ENCODE measurements at regions of chr20 and their contacts with region 1.

Region 1: GRCh38 chr20:45771182-45771759 is 20.4 kb downstream of the WFDC3 start:
- DNase-seq: peak; percentile 70
- H3K4me3 ChIP-seq: peak overlapping the region in 1 of 2 experiments; percentile 38; a peak in 1 of 4 replicates
- H3K27ac ChIP-seq: no peak overlapping the region
- H3K4me1 ChIP-seq: peaks cover 0 to 3% of the 10 kb centered on the region in 2 experiments; a peak in 2 of 4 replicates
- H3K27me3 ChIP-seq: no peaks in the 10 kb centered on the region
- CTCF ChIP-seq: peak; percentile 97
- EP300 ChIP-seq: no peak
- RAD21 ChIP-seq: peak; percentile 95

Region 2: GRCh38 chr20:45322952-45323383 is 448.3 kb before region 1 on chr20:
- CTCF ChIA-PET with region 1: interaction called, 80 read pairs
- POLR2A ChIA-PET with region 1: interaction called, 3 read pairs
- DNase-seq: no peak
- H3K4me3 ChIP-seq: no peak overlapping the region
- H3K27ac ChIP-seq: no peak overlapping the region
- H3K4me1 ChIP-seq: peaks cover 0 to 8% of the 10 kb centered on the region in 2 experiments; a peak in 1 of 4 replicates
- H3K27me3 ChIP-seq: no peaks in the 10 kb centered on the region
- CTCF ChIP-seq: peak; percentile 31; the same call in 1 of the 2 replicates
- EP300 ChIP-seq: no peak
- RAD21 ChIP-seq: peak; percentile 65

Region 3: GRCh38 chr20:45427236-45428149 is 343.8 kb before region 1 on chr20:
- CTCF ChIA-PET with region 1: interaction called, 12 read pairs
- POLR2A ChIA-PET with region 1: no interaction called
- DNase-seq: peak; percentile 80
- H3K4me3 ChIP-seq: no peak overlapping the region
- H3K27ac ChIP-seq: peak overlapping the region in 1 of 2 experiments; percentile 64; a peak in 2 of 4 replicates
- H3K4me1 ChIP-seq: peaks cover 0 to 20% of the 10 kb centered on the region in 2 experiments; a peak in 1 of 4 replicates
- H3K27me3 ChIP-seq: no peaks in the 10 kb centered on the region
- CTCF ChIP-seq: no peak
- EP300 ChIP-seq: peak in 1 of 2 experiments; percentile 86; a peak in 2 of 4 replicates
- RAD21 ChIP-seq: no peak

Region 4: GRCh38 chr20:45465491-45466266 is 305.6 kb before region 1 on chr20:
- CTCF ChIA-PET with region 1: interaction called, 67 read pairs
- POLR2A ChIA-PET with region 1: no interaction called
- DNase-seq: no peak
- H3K4me3 ChIP-seq: no peak overlapping the region
- H3K27ac ChIP-seq: no peak overlapping the region
- H3K4me1 ChIP-seq: peaks cover 0 to 2% of the 10 kb centered on the region in 2 experiments; a peak in 1 of 4 replicates
- H3K27me3 ChIP-seq: peaks cover 50% of the 10 kb centered on the region; the same call in 1 of the 2 replicates
- CTCF ChIP-seq: no peak
- EP300 ChIP-seq: no peak
- RAD21 ChIP-seq: no peak

Region 5: GRCh38 chr20:45742581-45742980 is 28.7 kb before region 1 on chr20:
- CTCF ChIA-PET with region 1: interaction called, 10 read pairs
- POLR2A ChIA-PET with region 1: no interaction called
- DNase-seq: no peak
- H3K4me3 ChIP-seq: no peak overlapping the region
- H3K27ac ChIP-seq: no peak overlapping the region
- H3K4me1 ChIP-seq: no peaks in the 10 kb centered on the region
- H3K27me3 ChIP-seq: no peaks in the 10 kb centered on the region; the same call in 1 of the 2 replicates
- CTCF ChIP-seq: no peak
- EP300 ChIP-seq: no peak
- RAD21 ChIP-seq: no peak

Region 6: DNA sequence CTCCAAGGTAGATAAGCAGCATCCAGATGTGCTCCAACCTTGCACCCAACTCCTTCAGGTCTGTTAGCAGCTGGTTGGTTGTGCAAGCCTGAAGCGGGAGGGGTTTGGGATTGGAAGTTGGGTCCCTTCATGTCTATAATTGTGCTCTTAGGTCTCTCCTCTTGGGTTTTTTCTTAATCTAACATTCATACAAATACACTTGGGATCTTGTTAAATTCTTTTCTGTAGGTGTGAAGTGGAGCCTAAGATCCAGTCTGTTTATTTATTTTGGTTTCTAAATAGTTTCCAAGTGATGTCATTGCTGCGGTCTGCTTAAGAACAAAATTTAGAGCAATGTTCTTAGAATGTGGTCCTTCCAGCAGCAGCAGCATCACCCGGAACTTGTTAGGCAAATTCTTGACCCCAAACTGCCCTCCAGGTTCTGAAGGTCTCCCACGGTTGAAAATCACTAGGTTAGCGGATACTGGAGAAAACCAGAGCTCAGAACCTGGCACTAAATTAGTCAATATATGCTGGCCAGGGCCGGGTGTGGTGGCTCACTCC is 46.5 kb after region 1 on chr20:
- CTCF ChIA-PET with region 1: interaction called, 11 read pairs
- POLR2A ChIA-PET with region 1: no interaction called
- DNase-seq: no peak
- H3K4me3 ChIP-seq: no peak overlapping the region
- H3K27ac ChIP-seq: no peak overlapping the region
- H3K4me1 ChIP-seq: peaks cover 0 to 11% of the 10 kb centered on the region in 2 experiments; a peak in 1 of 4 replicates
- H3K27me3 ChIP-seq: no peaks in the 10 kb centered on the region
- CTCF ChIP-seq: no peak
- EP300 ChIP-seq: no peak
- RAD21 ChIP-seq: no peak

Measured in SK-N-SH (cell line).